ENCODE measurements at regions of chrX and their contacts with region 1.

Region 1: DNA sequence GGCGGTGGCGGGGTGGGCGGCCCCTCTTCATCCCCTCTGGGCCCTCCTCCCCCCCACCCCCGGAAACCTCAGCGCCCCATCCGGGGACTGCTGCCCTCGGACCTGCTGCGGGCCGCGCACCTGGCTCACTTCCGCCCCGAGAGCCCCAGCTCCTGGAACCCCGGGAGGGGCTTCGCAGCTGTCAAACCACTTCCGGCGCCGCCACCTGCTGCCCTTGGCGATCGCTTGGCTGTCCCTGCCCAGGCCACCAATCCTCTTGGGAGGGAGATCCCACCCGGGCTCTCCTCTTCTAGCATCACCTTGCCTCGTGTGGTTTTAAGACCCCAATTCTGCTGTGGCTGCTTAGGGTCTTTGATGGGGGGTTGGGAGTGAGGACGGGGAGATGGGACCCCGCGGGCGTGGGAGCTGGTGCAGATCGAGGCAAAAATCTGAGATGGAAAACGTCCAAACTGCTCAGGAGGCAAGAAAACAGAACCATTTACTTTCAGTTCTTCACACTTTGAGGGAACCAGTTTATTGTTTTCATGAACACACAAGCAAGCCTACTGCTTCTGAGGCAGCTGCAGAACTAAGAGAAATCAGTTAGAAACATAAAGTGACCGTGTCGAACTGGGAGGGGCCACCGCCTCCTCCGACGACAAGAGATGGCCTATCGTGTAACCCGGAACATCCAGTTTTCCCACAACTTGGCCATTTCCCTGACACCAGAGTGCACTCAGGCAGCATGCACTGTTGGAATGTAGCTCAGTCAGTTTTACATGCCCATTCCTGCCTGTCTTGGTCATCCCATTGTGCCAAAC is 779 bp downstream of the MTMR1 start:
- DNase-seq: peak; percentile 53 to 78 (median 61)
- H3K4me3 ChIP-seq: peak overlapping the region; percentile 47 to 61
- H3K4me3 Mint-ChIP-seq: peak overlapping the region; percentile 93 to 98 (median 95)
- H3K27ac ChIP-seq: peak overlapping the region; percentile 71
- H3K27ac Mint-ChIP-seq: peak overlapping the region; percentile 95 to 99 (median 98)
- H3K4me1 ChIP-seq: peaks cover 73% of the 10 kb centered on the region
- H3K4me1 Mint-ChIP-seq: peaks cover 39 to 74% (median 61%) of the 10 kb centered on the region in 4 donors
- H3K27me3 ChIP-seq: no peaks in the 10 kb centered on the region
- H3K27me3 Mint-ChIP-seq: no peaks in the 10 kb centered on the region

Region 2: DNA sequence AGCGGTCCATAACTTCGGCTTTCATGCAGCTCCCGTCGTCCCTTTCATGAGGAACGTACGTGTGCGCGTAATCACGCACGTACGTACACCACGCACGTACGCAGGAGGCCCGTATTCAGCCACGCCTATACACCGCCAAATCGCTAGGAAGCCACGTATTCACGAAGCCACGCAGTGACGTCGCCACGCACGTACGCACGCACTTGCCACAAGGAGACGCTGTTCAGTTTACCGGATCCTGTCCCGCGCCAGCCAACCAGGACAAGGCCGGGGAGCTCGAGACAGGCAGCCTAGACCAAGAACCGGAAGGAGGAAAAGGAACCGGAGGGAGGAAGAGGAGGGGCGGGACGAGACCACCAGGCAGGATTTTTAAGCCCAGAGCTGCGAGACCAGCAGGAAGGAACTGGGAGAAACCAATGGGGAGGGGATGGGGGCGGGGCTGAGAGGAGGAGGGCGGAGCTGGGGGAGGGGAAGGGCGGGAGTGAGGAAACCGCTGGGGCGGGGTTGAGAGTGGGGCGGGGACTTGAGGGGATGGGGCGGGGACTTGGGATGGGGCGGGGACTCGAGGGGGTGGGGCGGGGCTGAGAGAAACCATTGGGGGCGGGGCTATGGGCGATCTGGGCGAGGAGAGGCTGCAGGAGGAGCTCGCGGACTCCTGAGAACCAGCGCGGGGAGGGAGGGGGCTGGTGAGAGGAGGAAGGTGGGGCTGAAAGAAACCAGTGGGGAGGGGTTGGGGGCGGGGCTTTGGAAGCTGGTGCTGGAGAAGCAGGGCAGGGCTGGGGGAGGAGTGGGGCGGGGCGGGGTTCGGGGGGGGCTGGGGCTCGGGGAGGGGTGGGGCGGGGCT is 755.3 kb before region 1 on chrX and contains the start of gene EOLA2:
- CTCF ChIA-PET with region 1: interaction called, 4 read pairs
- POLR2A ChIA-PET with region 1: interaction called, 12 read pairs
- intact Hi-C with region 1: no loop called
- DNase-seq: peak; percentile 89 to 97 (median 95)
- H3K4me3 ChIP-seq: peak within 1 kb of the TSS; percentile 22 to 66
- H3K4me3 Mint-ChIP-seq: peak within 1 kb of the TSS; percentile 80 to 97 (median 93)
- H3K27ac ChIP-seq: peak within 1 kb of the TSS; percentile 90
- H3K27ac Mint-ChIP-seq: peak within 1 kb of the TSS; percentile 93 to 100 (median 99)
- H3K4me1 ChIP-seq: peaks cover 11% of the 10 kb centered on the region
- H3K4me1 Mint-ChIP-seq: peaks cover 3 to 16% (median 8%) of the 10 kb centered on the region in 4 donors
- H3K27me3 ChIP-seq: no peaks in the 10 kb centered on the region
- H3K27me3 Mint-ChIP-seq: no peaks in the 10 kb centered on the region
- total RNA-seq, gene EOLA2: 38.1 to 41.1 TPM

Region 3: GRCh38 chrX:150683536-150684146 is 10.3 kb before region 1 on chrX:
- CTCF ChIA-PET with region 1: interaction called, 27 read pairs
- POLR2A ChIA-PET with region 1: interaction called, 8 read pairs
- intact Hi-C with region 1: no loop called
- DNase-seq: peak in 4 of 5 donors; percentile 59 to 67 (median 62)
- H3K4me3 ChIP-seq: no peak overlapping the region
- H3K4me3 Mint-ChIP-seq: no peak overlapping the region
- H3K27ac ChIP-seq: no peak overlapping the region
- H3K27ac Mint-ChIP-seq: peak overlapping the region in 3 of 7 donors; percentile 17 to 40 (median 17)
- H3K4me1 ChIP-seq: peaks cover 16% of the 10 kb centered on the region
- H3K4me1 Mint-ChIP-seq: peaks cover 10 to 12% (median 10%) of the 10 kb centered on the region in 4 donors
- H3K27me3 ChIP-seq: no peaks in the 10 kb centered on the region
- H3K27me3 Mint-ChIP-seq: no peaks in the 10 kb centered on the region

Region 4: DNA sequence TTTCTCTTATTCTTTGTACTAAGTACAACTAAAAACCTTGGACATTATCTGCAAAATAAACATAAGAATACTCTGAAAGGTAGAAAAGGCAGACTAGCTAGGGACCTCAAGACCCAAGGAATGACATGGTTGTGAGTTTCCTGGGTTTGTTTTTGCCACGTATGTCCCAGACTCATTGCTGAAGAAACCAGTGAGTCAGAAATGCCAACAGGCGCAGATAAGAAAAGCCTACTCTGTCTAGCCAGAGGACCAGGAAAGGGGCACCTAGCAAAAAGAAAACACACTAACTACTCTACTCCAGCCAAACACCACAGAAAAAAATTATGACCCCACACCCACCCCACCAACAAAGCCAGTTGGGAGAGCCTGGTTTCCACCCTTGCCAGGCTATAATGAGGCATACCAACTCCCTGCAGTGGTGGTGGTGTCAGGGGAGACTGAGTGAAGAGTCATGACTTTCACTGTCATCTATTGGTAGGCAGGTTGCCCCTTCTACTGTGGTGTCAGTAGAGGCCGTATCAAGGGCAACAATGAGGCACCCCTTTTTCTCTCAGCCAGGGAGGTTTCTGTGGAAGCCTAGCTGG is 10.1 kb after region 1 on chrX:
- CTCF ChIA-PET with region 1: interaction called, 6 read pairs
- POLR2A ChIA-PET with region 1: interaction called, 26 read pairs
- intact Hi-C with region 1: no loop called
- DNase-seq: no peak
- H3K4me3 ChIP-seq: no peak overlapping the region
- H3K4me3 Mint-ChIP-seq: no peak overlapping the region
- H3K27ac ChIP-seq: no peak overlapping the region
- H3K27ac Mint-ChIP-seq: peak overlapping the region in 2 of 7 donors; percentile 18 to 39
- H3K4me1 ChIP-seq: peaks cover 17% of the 10 kb centered on the region
- H3K4me1 Mint-ChIP-seq: peaks cover 17 to 55% (median 29%) of the 10 kb centered on the region in 4 donors
- H3K27me3 ChIP-seq: no peaks in the 10 kb centered on the region
- H3K27me3 Mint-ChIP-seq: no peaks in the 10 kb centered on the region

Region 5: GRCh38 chrX:150715184-150715583 is 21.2 kb after region 1 on chrX:
- CTCF ChIA-PET with region 1: interaction called, 16 read pairs
- POLR2A ChIA-PET with region 1: interaction called, 28 read pairs
- intact Hi-C with region 1: loop called (anchors 2 kb)
- DNase-seq: no peak
- H3K4me3 ChIP-seq: no peak overlapping the region
- H3K4me3 Mint-ChIP-seq: peak overlapping the region in 1 of 8 donors; percentile 30
- H3K27ac ChIP-seq: no peak overlapping the region
- H3K27ac Mint-ChIP-seq: peak overlapping the region in 6 of 7 donors; percentile 32 to 85 (median 63)
- H3K4me1 ChIP-seq: peaks cover 20% of the 10 kb centered on the region
- H3K4me1 Mint-ChIP-seq: peaks cover 9 to 48% (median 34%) of the 10 kb centered on the region in 4 donors
- H3K27me3 ChIP-seq: no peaks in the 10 kb centered on the region
- H3K27me3 Mint-ChIP-seq: no peaks in the 10 kb centered on the region